ENCODE measurements at regions of chr10 and their contacts with region 1.

Region 1: GRCh38 chr10:7243873-7244272 is 167.0 kb downstream of the SFMBT2 start:
- DNase-seq: no peak
- H3K4me3 Mint-ChIP-seq: peak overlapping the region; percentile 23
- H3K27ac Mint-ChIP-seq: peak overlapping the region; percentile 5
- H3K4me1 Mint-ChIP-seq: peaks cover 54% of the 10 kb centered on the region
- H3K27me3 Mint-ChIP-seq: no peaks in the 10 kb centered on the region

Region 2: GRCh38 chr10:7121154-7121810 is 122.6 kb before region 1 on chr10:
- intact Hi-C with region 1: loop called (anchors 1 kb)
- DNase-seq: peak; percentile 37
- H3K4me3 Mint-ChIP-seq: no peak overlapping the region
- H3K27ac Mint-ChIP-seq: peak overlapping the region; percentile 38
- H3K4me1 Mint-ChIP-seq: peaks cover 6% of the 10 kb centered on the region
- H3K27me3 Mint-ChIP-seq: peaks cover 36% of the 10 kb centered on the region

Region 3: DNA sequence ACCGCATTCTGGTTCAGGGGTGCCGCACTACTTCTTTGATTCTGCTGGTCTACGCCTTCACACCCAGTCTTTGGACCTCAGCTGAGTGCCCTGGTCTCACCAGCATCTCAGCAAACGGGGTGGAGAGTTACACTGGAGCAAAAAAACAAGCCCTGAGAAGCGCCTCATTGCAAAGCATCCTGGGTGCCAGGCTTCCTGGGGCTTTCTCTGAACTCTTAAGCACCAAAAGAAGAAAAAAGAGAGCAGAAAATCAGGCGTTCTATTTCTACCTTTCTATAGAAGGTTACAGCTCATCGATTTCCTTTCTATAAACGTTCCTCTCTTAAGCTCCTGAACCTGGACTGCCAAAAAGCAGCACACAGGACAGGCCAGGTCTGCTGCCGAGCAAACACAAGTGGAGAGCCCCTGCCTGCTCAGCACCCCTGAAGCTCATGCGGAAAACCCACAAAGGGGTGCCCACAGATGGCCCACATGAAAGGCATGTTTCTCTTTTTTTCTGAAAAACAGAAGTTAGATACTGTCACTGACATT is 51.0 kb before region 1 on chr10:
- intact Hi-C with region 1: loop called (anchors 1 kb)
- DNase-seq: peak; percentile 68
- H3K4me3 Mint-ChIP-seq: peak overlapping the region; percentile 76
- H3K27ac Mint-ChIP-seq: peak overlapping the region; percentile 97
- H3K4me1 Mint-ChIP-seq: peaks cover 73% of the 10 kb centered on the region
- H3K27me3 Mint-ChIP-seq: peaks cover 1% of the 10 kb centered on the region

Region 4: DNA sequence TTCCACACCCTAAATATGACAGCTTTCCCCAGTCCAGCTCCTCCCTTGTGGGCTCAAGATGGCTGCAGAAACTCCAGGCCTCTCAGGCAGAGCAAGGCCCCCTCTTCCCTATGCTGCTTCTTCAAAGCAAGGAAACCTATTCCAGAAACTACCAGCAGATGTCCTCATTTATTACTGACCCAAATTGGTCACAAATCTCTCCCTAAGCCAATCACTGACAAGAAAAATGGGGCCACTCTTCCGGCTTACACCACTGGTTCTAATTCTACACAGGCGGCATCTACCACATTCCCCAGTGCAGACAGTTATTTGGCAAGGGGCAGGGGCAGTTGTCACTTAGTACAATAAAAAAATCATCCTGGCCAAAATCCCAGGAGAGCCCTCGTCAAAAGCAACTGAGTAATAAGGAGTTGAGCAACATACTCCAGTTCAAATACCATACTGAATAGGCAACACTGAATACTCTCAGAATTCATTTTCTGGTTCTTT is 16.6 kb after region 1 on chr10:
- intact Hi-C with region 1: loop called (anchors 1 kb)
- DNase-seq: no peak
- H3K4me3 Mint-ChIP-seq: peak overlapping the region; percentile 49
- H3K27ac Mint-ChIP-seq: peak overlapping the region; percentile 75
- H3K4me1 Mint-ChIP-seq: peaks cover 59% of the 10 kb centered on the region
- H3K27me3 Mint-ChIP-seq: no peaks in the 10 kb centered on the region

Region 5: DNA sequence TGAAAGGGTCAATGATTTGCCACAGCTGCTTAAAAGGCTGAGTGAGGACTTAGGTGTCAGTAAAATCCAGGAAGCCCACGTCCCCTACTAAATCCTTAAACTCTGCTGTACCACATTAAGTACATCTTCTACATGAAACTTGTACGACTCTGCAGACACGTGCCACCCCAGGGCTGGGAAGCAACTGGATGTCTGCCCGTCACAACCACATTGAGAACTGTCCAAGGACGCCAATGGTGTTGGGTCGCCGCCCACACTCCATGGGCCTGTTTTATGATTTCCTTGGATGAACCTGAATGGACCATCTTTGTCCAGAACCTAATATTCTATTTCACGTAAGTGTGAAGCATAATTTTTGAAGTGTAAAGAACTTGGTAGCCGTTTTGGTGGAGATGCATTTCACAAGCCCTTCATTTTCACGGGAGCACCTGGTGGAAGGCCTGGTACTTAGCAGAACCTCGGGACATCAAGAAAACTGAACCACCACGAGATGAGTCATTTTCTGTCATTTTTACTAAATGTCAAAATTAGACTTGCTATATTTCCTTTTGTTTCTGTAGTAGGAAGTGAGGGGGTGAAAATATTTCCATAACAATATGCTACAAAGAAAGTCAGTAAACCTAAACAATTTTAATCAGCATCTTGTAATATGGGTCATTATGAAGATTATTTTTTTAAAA is 32.0 kb after region 1 on chr10:
- intact Hi-C with region 1: no loop called
- DNase-seq: no peak
- H3K4me3 Mint-ChIP-seq: no peak overlapping the region
- H3K27ac Mint-ChIP-seq: peak overlapping the region; percentile 83
- H3K4me1 Mint-ChIP-seq: peaks cover 57% of the 10 kb centered on the region
- H3K27me3 Mint-ChIP-seq: no peaks in the 10 kb centered on the region